Activated naive CD4-positive, alpha-beta T cell treated with anti-CD3 and anti-CD28 coated beads for 36 hours (primary cell): ENCODE measurements at regions of chr13 and their contacts with region 1.

Region 1: GRCh38 chr13:43797869-43798268 is 11.1 kb upstream of the ENOX1 start:
- DNase-seq: no peak
- H3K4me3 Mint-ChIP-seq: no peak overlapping the region
- H3K27ac Mint-ChIP-seq: no peak overlapping the region
- H3K4me1 Mint-ChIP-seq: peaks cover 30% of the 10 kb centered on the region
- H3K27me3 Mint-ChIP-seq: peaks cover 22% of the 10 kb centered on the region

Region 2: DNA sequence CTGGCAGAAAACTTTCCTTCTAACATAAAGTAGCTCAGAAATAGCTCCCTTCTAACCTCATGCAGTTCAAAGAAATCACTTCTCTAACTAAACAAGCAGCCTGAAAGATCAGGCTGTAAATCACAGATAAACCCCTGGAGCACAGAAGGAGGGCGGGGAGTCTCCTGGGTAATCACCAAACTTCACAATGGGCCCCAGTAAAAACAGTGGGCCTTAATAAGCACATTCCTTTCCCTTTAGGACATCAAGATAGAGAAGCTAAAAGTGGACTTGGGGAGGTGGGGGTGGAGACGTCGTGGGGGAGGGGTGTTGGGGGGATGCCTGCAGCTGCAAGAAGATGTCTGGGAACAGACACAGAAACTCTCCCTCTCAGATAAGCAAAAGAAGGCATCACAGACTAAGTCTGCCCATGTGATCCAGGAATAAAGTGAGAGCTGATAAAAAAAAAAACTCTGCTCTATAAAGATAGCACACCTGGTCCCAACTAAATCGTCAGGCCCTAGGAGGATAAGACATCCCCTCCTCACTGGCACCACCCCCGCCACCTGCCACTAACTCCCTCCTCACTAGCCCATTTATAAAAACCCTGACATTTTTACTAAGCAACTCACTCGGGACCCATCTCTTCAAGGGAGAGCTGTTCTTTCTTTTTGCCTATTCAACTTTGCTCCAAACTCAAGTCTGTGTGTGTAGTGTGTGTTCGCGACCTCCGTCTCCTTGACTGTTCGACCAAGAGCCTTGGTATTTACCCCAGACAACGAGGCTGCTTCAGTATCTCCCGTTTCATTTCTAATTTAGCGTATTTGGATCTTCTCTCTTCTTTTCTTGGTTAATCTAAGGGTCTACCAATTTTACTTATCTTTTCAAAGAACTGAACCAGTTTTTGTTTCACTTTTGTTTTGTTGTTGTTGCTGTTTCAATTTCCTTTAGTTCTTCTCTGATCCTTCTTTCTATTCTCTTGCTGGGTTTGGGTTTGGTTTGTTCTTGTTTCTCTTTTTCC is 742.8 kb before region 1 on chr13:
- CTCF ChIA-PET with region 1: no interaction called
- intact Hi-C with region 1: loop called (anchors 5 kb)
- DNase-seq: peak; percentile 38
- H3K4me3 Mint-ChIP-seq: no peak overlapping the region
- H3K27ac Mint-ChIP-seq: no peak overlapping the region
- H3K4me1 Mint-ChIP-seq: peaks cover 33% of the 10 kb centered on the region
- H3K27me3 Mint-ChIP-seq: no peaks in the 10 kb centered on the region

Region 3: DNA sequence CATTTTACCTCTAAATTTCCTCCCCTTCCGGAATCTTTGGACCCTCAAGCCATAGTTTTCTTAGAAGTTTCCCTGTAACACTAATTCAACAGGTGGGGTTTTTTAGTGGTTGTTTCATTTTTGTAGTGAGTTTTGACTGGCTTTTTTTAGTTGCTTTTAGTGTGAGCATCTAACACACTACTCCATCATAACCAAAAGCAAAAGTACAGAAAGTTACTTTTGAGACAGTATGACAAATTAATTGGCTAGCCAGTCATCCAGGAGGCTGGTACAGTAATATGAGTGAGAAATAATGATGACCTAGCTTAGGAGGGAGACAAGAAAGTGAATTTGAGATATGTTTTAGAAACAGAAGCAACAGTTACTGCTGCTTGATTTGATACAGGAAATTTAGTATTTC is 703.0 kb before region 1 on chr13:
- CTCF ChIA-PET with region 1: no interaction called
- intact Hi-C with region 1: loop called (anchors 2 kb)
- DNase-seq: no peak
- H3K4me3 Mint-ChIP-seq: no peak overlapping the region
- H3K27ac Mint-ChIP-seq: peak overlapping the region; percentile 62
- H3K4me1 Mint-ChIP-seq: peaks cover 22% of the 10 kb centered on the region
- H3K27me3 Mint-ChIP-seq: no peaks in the 10 kb centered on the region

Region 4: GRCh38 chr13:43596924-43597598 is 200.8 kb before region 1 on chr13:
- CTCF ChIA-PET with region 1: interaction called, 3 read pairs
- intact Hi-C with region 1: loop called (anchors 5 kb)
- DNase-seq: peak; percentile 6
- H3K4me3 Mint-ChIP-seq: no peak overlapping the region
- H3K27ac Mint-ChIP-seq: no peak overlapping the region
- H3K4me1 Mint-ChIP-seq: peaks cover 17% of the 10 kb centered on the region
- H3K27me3 Mint-ChIP-seq: peaks cover 3% of the 10 kb centered on the region

Region 5: GRCh38 chr13:43751624-43752023 is 46.2 kb before region 1 on chr13:
- CTCF ChIA-PET with region 1: no interaction called
- intact Hi-C with region 1: loop called (anchors 5 kb)
- DNase-seq: no peak
- H3K4me3 Mint-ChIP-seq: no peak overlapping the region
- H3K27ac Mint-ChIP-seq: no peak overlapping the region
- H3K4me1 Mint-ChIP-seq: peaks cover 3% of the 10 kb centered on the region
- H3K27me3 Mint-ChIP-seq: peaks cover 9% of the 10 kb centered on the region

Region 6: GRCh38 chr13:43933378-43933777 is 135.5 kb after region 1 on chr13:
- CTCF ChIA-PET with region 1: no interaction called
- intact Hi-C with region 1: no loop called
- DNase-seq: no peak
- H3K4me3 Mint-ChIP-seq: no peak overlapping the region
- H3K27ac Mint-ChIP-seq: no peak overlapping the region
- H3K4me1 Mint-ChIP-seq: no peaks in the 10 kb centered on the region
- H3K27me3 Mint-ChIP-seq: peaks cover 7% of the 10 kb centered on the region

Region 7: GRCh38 chr13:44197791-44198770 is 400.2 kb after region 1 on chr13:
- CTCF ChIA-PET with region 1: no interaction called
- intact Hi-C with region 1: loop called (anchors 5 kb)
- DNase-seq: peak; percentile 65
- H3K4me3 Mint-ChIP-seq: no peak overlapping the region
- H3K27ac Mint-ChIP-seq: no peak overlapping the region
- H3K4me1 Mint-ChIP-seq: peaks cover 36% of the 10 kb centered on the region
- H3K27me3 Mint-ChIP-seq: peaks cover 6% of the 10 kb centered on the region